ENCODE measurements at regions of chrX and their contacts with region 1.

Region 1: DNA sequence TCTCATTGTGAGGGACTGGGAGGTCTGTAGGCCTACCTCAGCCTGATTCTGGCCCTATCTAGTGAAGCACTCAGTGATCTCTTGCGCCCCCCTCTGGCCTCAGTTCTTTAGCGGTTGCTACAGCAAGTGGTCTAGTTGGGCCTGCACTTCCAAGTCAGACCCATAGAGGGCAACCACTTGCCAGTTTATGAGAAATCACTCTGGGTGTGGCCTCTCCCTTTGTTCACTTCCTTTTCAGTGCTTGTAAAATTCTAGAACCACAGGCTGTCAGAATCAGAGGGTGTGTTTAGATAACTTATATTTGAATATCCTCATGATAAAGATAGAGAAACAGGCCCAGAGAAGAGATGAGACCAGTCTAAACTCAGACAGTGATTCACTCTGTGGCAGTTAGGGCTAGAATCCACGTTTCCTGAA is 60.9 kb upstream of the LAS1L start:
- DNase-seq: peak; percentile 95 to 97 (median 97)
- ATAC-seq: peak; percentile 94
- H3K4me3 ChIP-seq: no peak overlapping the region
- H3K27ac ChIP-seq: peak overlapping the region; percentile 96
- H3K4me1 ChIP-seq: peaks cover 6% of the 10 kb centered on the region
- H3K27me3 ChIP-seq: no peaks in the 10 kb centered on the region

Region 2: DNA sequence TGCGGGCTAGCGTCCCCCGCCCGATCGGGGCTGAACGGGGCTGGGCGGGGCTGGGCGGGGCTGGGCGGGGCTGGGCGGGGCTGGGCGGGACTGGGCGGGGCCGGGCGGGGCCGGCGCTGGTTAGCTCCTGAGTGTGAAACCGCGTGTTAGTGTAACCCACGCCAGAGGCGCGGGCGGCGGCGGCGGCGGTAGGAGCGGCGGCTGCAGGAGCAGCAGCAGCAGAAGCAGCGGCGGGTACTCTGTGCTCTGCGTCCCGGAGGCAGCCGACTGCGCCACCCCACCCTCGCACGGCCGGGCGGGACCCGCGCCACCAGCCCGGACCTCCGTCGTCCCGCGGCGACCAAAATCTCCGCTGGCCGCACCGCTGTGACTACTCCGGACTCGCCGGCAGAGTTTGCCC is 188.9 kb before region 1 on chrX:
- intact Hi-C with region 1: no loop called
- DNase-seq: peak in 2 of 3 donors; percentile 46 to 50
- ATAC-seq: peak in 1 of 2 donors; percentile 44
- H3K4me3 ChIP-seq: peak overlapping the region; percentile 9
- H3K27ac ChIP-seq: no peak overlapping the region
- H3K4me1 ChIP-seq: no peaks in the 10 kb centered on the region
- H3K27me3 ChIP-seq: no peaks in the 10 kb centered on the region

Region 3: DNA sequence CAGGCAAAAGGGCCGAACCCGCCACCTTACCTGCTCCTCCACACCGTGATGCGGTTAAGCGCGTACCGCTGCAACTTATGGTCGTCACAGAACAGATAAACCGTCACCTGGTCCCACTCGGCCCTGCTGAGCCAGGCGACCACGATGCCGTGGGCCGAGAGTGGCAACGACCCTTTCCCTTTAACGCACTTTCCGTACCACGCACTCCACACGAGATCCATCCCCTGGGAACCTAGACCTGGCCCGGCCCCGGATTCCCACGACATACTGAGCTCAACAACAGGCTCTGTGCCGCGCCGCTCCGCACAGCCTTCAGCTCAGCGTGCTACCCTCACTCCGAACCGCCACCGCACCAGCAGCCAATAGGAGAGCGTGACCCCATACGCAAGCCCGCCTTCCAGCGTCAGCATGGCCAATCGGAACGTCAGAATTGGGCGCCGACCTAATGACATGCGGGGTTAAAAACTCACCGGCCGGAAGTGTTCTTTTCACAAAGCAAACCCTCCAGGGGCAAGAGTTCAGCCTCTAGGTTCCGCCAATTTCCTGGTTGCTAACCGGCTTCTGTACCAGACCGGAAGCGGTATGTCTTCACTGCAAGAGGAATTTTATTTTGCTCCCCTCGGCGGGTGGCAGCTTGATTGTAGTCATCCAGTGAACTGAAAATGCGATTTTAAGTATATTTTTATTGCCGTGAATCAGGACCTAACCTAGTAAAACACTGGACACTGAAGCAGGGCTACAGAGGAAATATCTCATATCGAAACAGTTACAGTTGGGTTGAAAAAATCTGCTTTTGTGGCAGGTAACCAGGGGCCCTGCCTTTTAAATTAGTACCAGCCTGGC is 60.8 kb before region 1 on chrX and contains the start of gene LAS1L:
- intact Hi-C with region 1: no loop called
- DNase-seq: peak; percentile 91 to 96 (median 95)
- ATAC-seq: peak; percentile 100
- H3K4me3 ChIP-seq: peak within 1 kb of the TSS; percentile 78
- H3K27ac ChIP-seq: peak within 1 kb of the TSS; percentile 54
- H3K4me1 ChIP-seq: peaks cover 8% of the 10 kb centered on the region
- H3K27me3 ChIP-seq: no peaks in the 10 kb centered on the region
- total RNA-seq, gene LAS1L: 15.4 to 20.4 (median 17.2) TPM

Region 4: DNA sequence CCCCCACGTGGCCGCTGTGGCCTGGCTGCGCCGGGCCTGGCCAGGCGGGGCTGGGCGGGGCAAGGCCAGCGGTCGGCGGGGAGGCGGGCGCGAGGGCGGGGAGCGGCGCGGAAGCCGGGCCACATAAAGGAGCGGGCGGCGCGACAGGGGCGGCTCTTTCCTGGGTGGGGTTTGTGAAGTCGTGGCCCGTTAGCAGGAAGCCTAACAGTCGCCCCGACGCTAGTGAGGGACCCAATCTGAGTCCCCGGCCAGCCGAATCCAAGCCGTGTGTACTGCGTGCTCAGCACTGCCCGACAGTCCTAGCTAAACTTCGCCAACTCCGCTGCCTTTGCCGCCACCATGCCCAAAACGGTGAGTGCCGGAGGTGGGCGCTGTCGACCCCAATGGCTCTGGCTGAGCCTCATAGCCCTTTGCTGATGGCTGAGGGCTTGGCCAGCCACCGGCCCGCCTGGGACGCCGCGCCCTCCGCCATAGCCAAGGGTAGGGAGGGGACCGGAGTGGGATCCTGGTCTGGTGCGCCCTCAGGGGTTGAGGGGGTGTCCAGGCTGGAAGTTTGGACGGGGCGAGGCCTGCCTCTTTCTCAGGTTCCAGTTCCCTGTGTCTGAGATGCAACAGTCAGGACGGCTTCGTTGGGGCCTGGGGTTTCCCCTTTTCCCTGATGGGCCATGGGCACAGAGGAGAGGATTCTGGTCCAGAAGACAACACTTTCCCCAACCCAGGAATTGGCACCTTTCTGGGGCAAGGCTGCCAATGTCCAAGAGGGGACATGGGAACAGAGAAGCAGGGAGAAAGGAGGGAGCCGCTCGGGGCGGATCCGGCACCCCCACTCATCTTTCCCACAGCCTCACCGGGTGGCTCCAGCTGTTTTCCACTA is 72.3 kb after region 1 on chrX and contains the start of gene MSN:
- intact Hi-C with region 1: loop called in 1 of 4 experiments (anchors 10 kb)
- DNase-seq: peak; percentile 86 to 93 (median 93)
- ATAC-seq: peak; percentile 90 to 96
- H3K4me3 ChIP-seq: peak within 1 kb of the TSS; percentile 54
- H3K27ac ChIP-seq: peak within 1 kb of the TSS; percentile 78
- H3K4me1 ChIP-seq: peaks cover 2% of the 10 kb centered on the region
- H3K27me3 ChIP-seq: no peaks in the 10 kb centered on the region
- total RNA-seq, gene MSN: 111 to 201 (median 120) TPM

Region 5: DNA sequence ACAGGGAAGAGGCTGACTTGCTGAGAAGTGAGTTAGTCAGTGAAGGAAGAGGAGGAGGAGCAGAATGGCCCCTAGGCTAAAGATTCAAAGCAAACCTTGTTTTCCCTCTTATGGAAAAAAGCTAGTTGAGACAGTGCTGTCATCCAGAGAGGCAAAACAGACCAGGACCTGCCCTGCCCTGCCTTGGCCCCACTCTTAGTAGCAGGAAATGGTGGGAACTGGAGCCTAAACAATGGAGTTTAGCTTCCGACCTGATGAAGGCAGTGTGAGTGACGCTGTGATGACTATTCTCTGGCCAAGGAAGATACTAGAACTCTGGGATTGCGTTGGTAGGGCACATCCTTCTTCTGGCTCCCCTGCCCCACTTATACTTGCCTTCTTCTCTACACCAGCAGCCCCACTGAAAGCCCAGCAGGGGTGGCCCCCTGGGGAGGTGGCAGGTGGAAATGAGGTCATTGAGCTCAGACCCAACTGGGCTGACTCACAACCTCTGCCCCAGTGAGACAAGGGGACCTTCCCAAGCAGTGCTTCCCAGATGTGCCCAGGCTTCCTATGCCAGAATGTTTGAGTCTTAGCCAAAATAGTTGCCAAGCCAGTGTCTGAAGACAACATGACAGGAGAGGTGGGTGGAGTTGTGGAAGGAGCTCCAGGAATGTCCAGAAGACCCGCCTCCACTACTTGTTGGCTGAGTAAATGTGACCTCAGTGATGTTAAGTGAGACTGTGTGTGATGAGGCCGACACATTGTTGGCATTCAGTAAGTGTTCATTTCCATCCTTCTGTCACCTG is 110.8 kb after region 1 on chrX:
- intact Hi-C with region 1: loop called in 1 of 4 experiments (anchors 5 kb)
- DNase-seq: peak; percentile 54 to 61 (median 60)
- ATAC-seq: peak; percentile 85 to 86
- H3K4me3 ChIP-seq: no peak overlapping the region
- H3K27ac ChIP-seq: peak overlapping the region; percentile 99
- H3K4me1 ChIP-seq: peaks cover 37% of the 10 kb centered on the region
- H3K27me3 ChIP-seq: no peaks in the 10 kb centered on the region

Region 6: DNA sequence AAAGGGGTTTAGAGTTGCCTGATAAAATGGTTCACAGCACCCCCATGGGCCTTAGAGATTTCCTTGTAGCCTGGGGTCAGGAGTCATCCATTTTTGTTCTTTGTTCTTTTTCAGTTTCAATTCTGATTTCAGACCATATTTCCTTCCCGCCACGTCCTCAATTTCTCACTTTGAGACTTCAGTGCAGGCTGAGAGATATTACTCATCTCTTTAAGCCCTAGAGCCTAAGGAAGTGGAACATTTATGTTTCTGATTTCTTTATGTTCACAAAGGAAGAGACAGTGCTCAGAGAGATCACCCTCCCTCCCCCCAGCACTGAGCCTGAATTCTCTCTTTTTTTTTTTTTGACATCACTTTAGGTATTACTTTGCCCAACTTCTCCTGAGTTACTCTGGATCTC is 128.2 kb after region 1 on chrX:
- intact Hi-C with region 1: loop called in 1 of 4 experiments (anchors 10 kb)
- DNase-seq: no peak
- ATAC-seq: peak in 1 of 2 donors; percentile 42
- H3K4me3 ChIP-seq: no peak overlapping the region
- H3K27ac ChIP-seq: no peak overlapping the region
- H3K4me1 ChIP-seq: peaks cover 5% of the 10 kb centered on the region
- H3K27me3 ChIP-seq: no peaks in the 10 kb centered on the region

Region 7: DNA sequence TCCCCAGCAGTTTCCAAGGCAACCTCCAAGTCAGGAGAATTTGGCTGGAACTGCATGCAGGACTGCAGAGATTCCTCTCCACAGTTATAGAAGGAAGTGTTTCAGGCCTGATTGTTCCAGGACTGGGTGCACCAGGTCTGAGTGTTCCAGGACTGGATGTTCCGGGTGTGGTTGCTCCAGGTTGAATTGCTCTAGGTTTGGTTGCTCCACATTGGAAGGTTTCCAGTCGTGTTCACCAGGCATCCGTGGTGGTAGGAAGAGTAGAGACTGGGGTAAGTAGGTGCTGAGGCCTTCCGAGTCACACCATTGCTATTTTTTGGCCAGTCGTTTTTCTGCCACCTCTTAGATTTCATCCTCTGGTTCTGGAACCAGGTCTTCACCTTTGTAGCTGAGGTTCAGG is 177.4 kb after region 1 on chrX:
- intact Hi-C with region 1: no loop called
- DNase-seq: no peak
- ATAC-seq: no peak
- H3K4me3 ChIP-seq: no peak overlapping the region
- H3K27ac ChIP-seq: no peak overlapping the region
- H3K4me1 ChIP-seq: peaks cover 2% of the 10 kb centered on the region
- H3K27me3 ChIP-seq: no peaks in the 10 kb centered on the region

Region 8: GRCh38 chrX:66022632-66023384 is 427.3 kb after region 1 on chrX:
- intact Hi-C with region 1: no loop called
- DNase-seq: no peak
- ATAC-seq: peak in 1 of 2 donors; percentile 18
- H3K4me3 ChIP-seq: no peak overlapping the region
- H3K27ac ChIP-seq: no peak overlapping the region
- H3K4me1 ChIP-seq: no peaks in the 10 kb centered on the region
- H3K27me3 ChIP-seq: no peaks in the 10 kb centered on the region

Measured in right cardiac atrium (tissue), 5 donors.